ENCODE measurements at regions of chr18 and their contacts with region 1.

Region 1: GRCh38 chr18:2655178-2655953 is at the start of gene SMCHD1:
- DNase-seq: peak; percentile 88
- ATAC-seq: peak; percentile 76
- H3K4me3 Mint-ChIP-seq: peak within 1 kb of the TSS; percentile 92
- H3K27ac Mint-ChIP-seq: peak within 1 kb of the TSS; percentile 95
- H3K4me1 Mint-ChIP-seq: peaks cover 41% of the 10 kb centered on the region
- H3K27me3 Mint-ChIP-seq: no peaks in the 10 kb centered on the region
- total RNA-seq, gene SMCHD1: 137 to 142 TPM

Region 2: GRCh38 chr18:2559249-2559648 is 96.1 kb before region 1 on chr18:
- CTCF ChIA-PET with region 1: no interaction called
- POLR2A ChIA-PET with region 1: no interaction called
- DNase-seq: no peak
- ATAC-seq: no peak
- H3K4me3 Mint-ChIP-seq: no peak overlapping the region
- H3K27ac Mint-ChIP-seq: no peak overlapping the region
- H3K4me1 Mint-ChIP-seq: no peaks in the 10 kb centered on the region
- H3K27me3 Mint-ChIP-seq: no peaks in the 10 kb centered on the region

Region 3: GRCh38 chr18:2571200-2572143 is 83.9 kb before region 1 on chr18 and contains the starts of genes METTL4 and NDC80:
- CTCF ChIA-PET with region 1: interaction called, 5 read pairs
- POLR2A ChIA-PET with region 1: interaction called, 56 read pairs
- DNase-seq: peak; percentile 90
- ATAC-seq: peak; percentile 81
- H3K4me3 Mint-ChIP-seq: peak within 1 kb of the TSS; percentile 98
- H3K27ac Mint-ChIP-seq: peak within 1 kb of the TSS; percentile 99
- H3K4me1 Mint-ChIP-seq: peaks cover 47% of the 10 kb centered on the region
- H3K27me3 Mint-ChIP-seq: no peaks in the 10 kb centered on the region
- total RNA-seq, gene METTL4: 22.2 to 22.3 TPM
- total RNA-seq, gene NDC80: 91.3 to 103 TPM

Region 4: GRCh38 chr18:2606335-2606734 is 49.0 kb before region 1 on chr18:
- CTCF ChIA-PET with region 1: interaction called, 18 read pairs
- POLR2A ChIA-PET with region 1: interaction called, 71 read pairs
- DNase-seq: no peak
- ATAC-seq: no peak
- H3K4me3 Mint-ChIP-seq: peak overlapping the region; percentile 54
- H3K27ac Mint-ChIP-seq: peak overlapping the region; percentile 78
- H3K4me1 Mint-ChIP-seq: peaks cover 44% of the 10 kb centered on the region
- H3K27me3 Mint-ChIP-seq: no peaks in the 10 kb centered on the region

Region 5: GRCh38 chr18:2636126-2636631 is 19.2 kb before region 1 on chr18:
- CTCF ChIA-PET with region 1: interaction called, 33 read pairs
- POLR2A ChIA-PET with region 1: interaction called, 295 read pairs
- DNase-seq: no peak
- ATAC-seq: peak; percentile 36
- H3K4me3 Mint-ChIP-seq: peak overlapping the region; percentile 70
- H3K27ac Mint-ChIP-seq: peak overlapping the region; percentile 100
- H3K4me1 Mint-ChIP-seq: peaks cover 69% of the 10 kb centered on the region
- H3K27me3 Mint-ChIP-seq: no peaks in the 10 kb centered on the region

Region 6: DNA sequence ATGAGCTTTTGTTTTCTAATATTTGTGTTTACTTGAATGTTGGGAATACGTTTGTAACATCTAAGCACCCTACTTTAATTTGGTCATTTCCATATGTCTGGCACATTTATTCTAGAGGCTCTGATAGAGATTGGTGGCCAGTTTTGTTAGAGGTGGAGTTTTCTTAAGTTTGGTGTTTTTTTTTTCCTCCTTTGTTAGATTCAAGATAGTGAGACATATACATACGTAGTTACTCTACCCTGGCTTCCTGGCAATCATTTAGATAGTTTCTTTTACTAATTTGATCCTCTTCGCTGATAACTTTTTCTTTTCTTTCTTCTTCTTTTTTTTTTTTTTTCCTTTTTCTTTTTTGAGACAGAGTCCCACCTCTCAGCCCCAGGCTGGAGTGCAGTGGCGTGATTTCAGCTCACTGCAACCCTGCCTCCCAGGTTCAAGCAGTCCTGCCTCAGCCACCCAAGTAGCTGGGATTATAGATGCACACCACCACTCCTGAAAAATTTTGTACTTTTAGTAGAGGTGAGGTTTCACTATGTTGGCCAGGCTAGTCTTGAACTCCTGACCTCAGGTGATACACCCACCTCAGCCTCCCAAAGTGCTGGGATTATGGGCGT is 26.7 kb after region 1 on chr18:
- CTCF ChIA-PET with region 1: no interaction called
- POLR2A ChIA-PET with region 1: interaction called, 31 read pairs
- DNase-seq: no peak
- ATAC-seq: peak; percentile 34
- H3K4me3 Mint-ChIP-seq: peak overlapping the region; percentile 24
- H3K27ac Mint-ChIP-seq: peak overlapping the region; percentile 54
- H3K4me1 Mint-ChIP-seq: peaks cover 59% of the 10 kb centered on the region
- H3K27me3 Mint-ChIP-seq: no peaks in the 10 kb centered on the region

Region 7: DNA sequence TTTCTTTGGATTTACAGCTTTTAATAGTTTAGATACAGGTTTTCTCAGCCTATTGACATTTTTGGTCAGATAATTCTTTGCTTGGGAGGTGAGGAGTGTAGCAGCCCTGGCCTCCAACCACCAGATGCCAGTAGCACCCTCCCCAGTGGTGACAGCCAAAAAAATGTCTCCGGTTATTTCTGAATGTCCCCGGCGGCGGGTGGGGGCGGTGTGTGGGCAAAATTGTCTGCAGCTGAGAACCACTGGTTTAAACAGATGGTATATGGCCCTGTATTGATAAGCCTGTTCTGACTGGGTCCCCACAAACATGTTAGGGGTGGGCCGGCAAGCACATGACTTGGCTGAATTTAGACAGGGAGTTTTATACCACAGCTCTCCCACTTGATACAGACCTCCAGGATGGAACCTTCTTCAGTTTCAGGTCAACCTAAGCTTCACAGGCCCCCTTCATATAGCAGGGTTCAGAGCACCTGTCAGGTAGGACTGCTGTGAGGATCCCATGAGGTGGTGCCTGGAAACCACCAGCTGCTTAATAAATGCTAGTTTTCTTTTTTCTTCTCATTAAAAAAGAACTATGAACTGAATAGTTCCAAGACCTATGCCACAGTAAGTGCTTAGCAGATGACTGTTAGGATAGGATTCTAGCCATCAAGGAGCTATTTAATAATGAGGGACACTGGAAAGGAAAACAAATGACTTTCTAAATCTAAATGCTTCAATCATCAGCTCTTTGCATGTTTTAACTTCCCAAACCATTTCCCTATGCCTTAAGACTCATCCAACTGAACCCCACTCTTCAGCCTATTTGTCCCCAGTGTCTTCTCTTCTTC is 339.5 kb after region 1 on chr18:
- CTCF ChIA-PET with region 1: no interaction called
- POLR2A ChIA-PET with region 1: no interaction called
- DNase-seq: peak; percentile 79
- ATAC-seq: peak; percentile 77
- H3K4me3 Mint-ChIP-seq: peak overlapping the region; percentile 46
- H3K27ac Mint-ChIP-seq: peak overlapping the region; percentile 57
- H3K4me1 Mint-ChIP-seq: peaks cover 77% of the 10 kb centered on the region
- H3K27me3 Mint-ChIP-seq: no peaks in the 10 kb centered on the region

Measured in activated CD8-positive, alpha-beta T cell treated with anti-CD3 and anti-CD28 coated beads, Interleukin-2, amount 10 ng/mL, durations not matched to agents 7 days and 5 days (primary cell).